ENCODE measurements at regions of chr17 and their contacts with region 1.

Region 1: DNA sequence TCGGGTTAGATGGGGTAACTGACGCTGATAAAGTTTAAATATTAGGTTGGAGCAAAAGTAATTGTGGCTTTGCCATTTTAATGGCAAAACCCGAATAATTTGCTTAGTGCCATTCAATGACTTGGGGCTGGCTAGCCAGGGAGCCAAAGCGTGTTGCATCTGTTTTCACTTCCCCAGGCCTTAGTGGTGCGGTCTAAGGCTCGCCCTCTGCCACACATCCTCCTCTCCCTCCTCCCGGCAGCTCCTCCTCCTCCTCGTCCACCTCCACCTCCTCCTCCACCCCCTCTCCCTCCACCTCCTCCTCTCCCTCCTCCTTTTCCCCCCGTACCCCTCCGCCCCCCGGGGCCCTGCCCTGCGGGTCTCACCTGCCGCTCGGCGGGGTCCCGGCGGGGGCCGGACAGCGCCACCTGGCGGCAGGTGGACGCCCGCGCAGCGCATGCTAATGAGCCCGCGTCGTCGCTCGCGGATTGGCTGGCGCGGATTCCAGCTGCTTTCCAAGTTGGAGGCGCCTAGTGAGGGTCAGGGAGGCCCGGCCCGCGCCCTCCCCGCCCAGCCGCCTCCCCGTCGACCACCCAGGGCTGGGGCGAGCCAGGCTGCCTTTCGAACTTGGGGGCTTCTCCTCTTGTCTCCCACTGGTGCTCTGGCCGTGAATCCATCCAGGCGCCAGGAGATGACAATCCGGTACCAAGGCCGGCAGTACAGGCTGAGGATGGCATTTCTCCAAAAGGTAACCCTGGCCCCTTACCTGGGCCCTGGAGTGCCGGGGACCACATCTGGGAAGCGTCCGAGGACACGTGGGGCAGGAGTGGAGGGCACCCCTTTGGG is 36.6 kb upstream of the RGS9 start:
- DNase-seq: peak; percentile 70
- ATAC-seq: peak; percentile 90
- H3K4me3 ChIP-seq: peak overlapping the region; percentile 54 to 65
- H3K27ac ChIP-seq: peak overlapping the region; percentile 69
- H3K4me1 ChIP-seq: peaks cover 16 to 25% of the 10 kb centered on the region in 2 experiments
- H3K27me3 ChIP-seq: no peaks in the 10 kb centered on the region
- CTCF ChIP-seq: peak; percentile 84 to 98 (median 97)
- POLR2A ChIP-seq: no peak
- RAD21 ChIP-seq: peak; percentile 85

Region 2: DNA sequence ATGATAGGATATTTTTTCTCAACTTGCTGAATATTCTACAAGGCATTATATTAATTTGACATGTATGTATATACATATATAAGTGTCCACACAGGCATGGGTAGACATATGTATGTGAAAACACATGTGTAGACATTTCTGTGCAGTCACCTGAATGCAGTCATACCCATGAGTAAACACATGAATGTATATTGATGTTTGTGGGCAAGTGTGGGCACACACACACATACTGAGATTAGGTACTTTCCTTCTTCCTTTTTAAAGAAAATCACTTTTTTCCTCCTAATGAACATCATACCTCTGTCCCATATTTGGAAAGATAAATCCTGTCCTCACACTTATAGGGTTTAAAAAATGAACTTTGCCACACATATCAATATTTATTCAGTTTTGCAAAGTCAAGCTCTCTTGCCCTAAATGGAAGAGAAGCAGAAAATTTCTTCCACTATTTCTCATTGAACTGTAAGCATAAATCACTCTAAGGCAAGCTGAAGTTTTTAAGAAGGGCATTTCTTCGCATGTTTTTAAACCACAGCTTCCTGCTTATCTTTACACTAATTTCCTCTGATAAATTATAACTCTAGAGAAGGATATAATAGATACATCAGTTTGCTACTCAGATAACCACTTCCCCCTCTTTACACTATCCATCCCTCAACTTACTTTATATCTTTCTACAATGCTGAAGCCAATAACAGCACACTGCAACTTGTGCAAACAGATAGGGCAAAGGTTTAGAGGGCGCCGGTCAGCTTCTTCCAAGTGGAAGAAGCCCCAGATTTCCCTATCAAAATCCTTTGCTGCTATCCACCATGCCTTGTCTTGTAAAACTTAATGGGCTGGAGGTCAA is 131.7 kb before region 1 on chr17:
- CTCF ChIA-PET with region 1: interaction called, 4 read pairs
- POLR2A ChIA-PET with region 1: interaction called, 4 read pairs
- RAD21 ChIA-PET with region 1: no interaction called
- intact Hi-C with region 1: loop called (anchors 5 kb)
- DNase-seq: no peak
- ATAC-seq: no peak
- H3K4me3 ChIP-seq: no peak overlapping the region
- H3K27ac ChIP-seq: no peak overlapping the region
- H3K4me1 ChIP-seq: peaks cover 15 to 32% of the 10 kb centered on the region in 2 experiments
- H3K27me3 ChIP-seq: no peaks in the 10 kb centered on the region
- CTCF ChIP-seq: no peak; a peak in 1 of 6 replicates
- POLR2A ChIP-seq: no peak
- RAD21 ChIP-seq: peak; percentile 28; the same call in 1 of the 2 replicates

Region 3: DNA sequence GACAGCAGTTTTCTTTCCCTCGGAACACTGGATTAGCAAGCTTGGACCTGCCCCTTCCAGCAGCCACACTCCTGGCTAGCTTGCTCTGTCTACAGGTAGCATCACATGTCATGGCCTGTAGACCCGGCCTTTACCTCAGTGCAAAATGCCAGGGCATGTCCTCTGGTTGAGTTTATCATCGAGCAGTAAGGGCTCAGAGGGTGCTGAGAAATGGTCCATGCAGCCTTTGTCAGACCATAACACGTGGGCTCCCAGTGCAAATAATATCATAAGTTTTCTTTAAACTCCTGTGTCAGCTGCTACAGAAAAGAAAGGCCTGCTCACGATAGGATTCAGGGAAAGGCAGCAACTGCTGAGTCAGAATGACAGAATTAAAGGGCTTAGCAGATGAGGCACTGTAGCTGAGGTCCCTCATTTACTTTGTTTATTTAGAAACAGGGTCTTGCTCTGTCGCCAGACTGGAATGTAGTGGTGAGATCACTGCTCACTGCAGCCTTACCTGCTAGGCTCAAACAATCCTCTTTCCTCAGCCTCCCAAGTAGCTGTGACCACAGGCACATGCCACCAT is 36.0 kb before region 1 on chr17:
- CTCF ChIA-PET with region 1: interaction called, 15 read pairs
- POLR2A ChIA-PET with region 1: interaction called, 5 read pairs
- RAD21 ChIA-PET with region 1: no interaction called
- intact Hi-C with region 1: no loop called
- DNase-seq: no peak
- ATAC-seq: peak; percentile 78
- H3K4me3 ChIP-seq: no peak overlapping the region
- H3K27ac ChIP-seq: peak overlapping the region; percentile 8; the same call in 1 of the 2 replicates
- H3K4me1 ChIP-seq: peaks cover 16 to 25% of the 10 kb centered on the region in 2 experiments
- H3K27me3 ChIP-seq: no peaks in the 10 kb centered on the region
- CTCF ChIP-seq: no peak
- POLR2A ChIP-seq: no peak
- RAD21 ChIP-seq: no peak

Region 4: GRCh38 chr17:65085397-65085796 is 15.1 kb before region 1 on chr17:
- CTCF ChIA-PET with region 1: interaction called, 27 read pairs
- POLR2A ChIA-PET with region 1: interaction called, 4 read pairs
- RAD21 ChIA-PET with region 1: no interaction called
- intact Hi-C with region 1: no loop called
- DNase-seq: no peak
- ATAC-seq: no peak
- H3K4me3 ChIP-seq: no peak overlapping the region
- H3K27ac ChIP-seq: no peak overlapping the region
- H3K4me1 ChIP-seq: no peaks in the 10 kb centered on the region
- H3K27me3 ChIP-seq: no peaks in the 10 kb centered on the region; the same call in 1 of the 2 replicates
- CTCF ChIP-seq: no peak
- POLR2A ChIP-seq: no peak
- RAD21 ChIP-seq: no peak

Region 5: DNA sequence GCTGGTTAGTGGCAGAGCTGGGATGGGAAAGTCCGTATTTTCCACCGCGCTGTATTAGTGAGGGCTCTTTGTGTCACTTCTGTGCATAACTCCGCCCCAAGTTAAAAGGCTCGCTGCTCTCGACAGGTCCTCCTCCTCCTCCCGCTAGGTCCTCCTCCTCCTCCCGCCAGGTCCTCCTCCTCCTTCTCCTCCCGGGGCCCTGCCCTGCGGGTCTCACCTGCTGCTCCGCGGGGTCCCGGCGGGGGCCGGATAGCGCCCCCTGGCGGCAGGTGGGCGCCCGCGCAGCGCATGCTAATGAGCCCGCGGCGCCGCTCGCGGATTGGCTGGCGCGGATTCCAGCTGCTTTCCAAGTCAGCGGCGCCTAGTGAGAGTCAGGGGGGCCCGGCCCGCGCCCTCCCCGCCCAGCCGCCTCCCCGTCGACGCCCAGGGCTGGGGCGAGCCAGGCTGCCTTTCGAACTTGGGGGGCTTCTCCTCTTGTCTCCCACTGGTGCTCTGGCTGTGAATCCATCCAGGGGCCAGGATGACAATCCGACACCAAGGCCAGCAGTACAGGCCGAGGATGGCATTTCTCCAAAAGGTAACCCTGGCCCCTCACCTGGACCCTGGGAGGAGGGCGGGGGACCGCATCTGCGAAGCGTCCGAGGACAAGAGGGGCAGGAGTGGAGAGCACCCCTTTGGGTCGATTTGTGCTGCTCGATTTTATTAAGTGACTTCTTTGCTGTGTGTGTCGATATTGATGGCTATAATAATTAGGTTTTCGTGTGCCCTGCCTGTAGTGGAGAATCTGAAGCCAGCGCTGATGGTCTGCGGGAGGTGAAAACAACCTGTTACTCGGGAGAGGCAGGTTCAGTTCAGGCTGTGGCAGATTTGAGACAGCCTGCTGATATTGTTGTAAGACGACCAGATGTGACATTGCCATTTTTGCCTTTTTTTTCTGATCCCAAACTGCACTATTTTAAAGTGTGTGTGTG is 36.8 kb after region 1 on chr17 and contains the start of gene RGS9:
- CTCF ChIA-PET with region 1: interaction called, 20 read pairs
- POLR2A ChIA-PET with region 1: no interaction called
- RAD21 ChIA-PET with region 1: interaction called in 1 of 2 experiments, 7 read pairs
- intact Hi-C with region 1: loop called (anchors 2 kb)
- DNase-seq: peak; percentile 84
- ATAC-seq: peak; percentile 98
- H3K4me3 ChIP-seq: peak within 1 kb of the TSS; percentile 40 to 51
- H3K27ac ChIP-seq: no peak within 1 kb of the TSS
- H3K4me1 ChIP-seq: peaks cover 4 to 13% of the 10 kb centered on the region in 2 experiments; a peak in 3 of 4 replicates
- H3K27me3 ChIP-seq: peaks cover 19% of the 10 kb centered on the region; the same call in 1 of the 2 replicates
- CTCF ChIP-seq: peak; percentile 90 to 100 (median 97)
- POLR2A ChIP-seq: no peak
- RAD21 ChIP-seq: peak; percentile 83
- total RNA-seq, gene RGS9: 8.6 TPM

Region 6: DNA sequence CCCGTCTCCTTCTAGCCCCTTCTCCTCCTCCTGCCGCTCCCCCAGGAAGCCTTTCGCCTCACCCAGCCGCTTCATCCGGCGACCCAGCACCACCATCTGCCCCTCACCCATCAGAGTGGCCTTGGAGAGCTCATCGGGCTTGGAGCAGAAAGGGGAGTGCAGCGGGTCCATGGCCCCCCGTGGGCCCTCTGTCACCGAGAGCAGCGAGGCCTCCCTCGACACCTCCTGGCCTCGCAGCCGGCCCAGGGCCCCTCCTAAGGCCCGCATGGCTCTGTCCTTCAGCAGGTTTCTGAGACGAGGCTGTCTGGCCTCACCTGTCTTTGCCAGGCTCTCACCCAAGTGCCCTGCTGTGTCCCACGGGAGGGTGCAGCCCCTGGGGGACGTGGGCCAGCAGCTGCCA is 124.5 kb after region 1 on chr17:
- CTCF ChIA-PET with region 1: no interaction called
- POLR2A ChIA-PET with region 1: no interaction called
- RAD21 ChIA-PET with region 1: no interaction called
- intact Hi-C with region 1: no loop called
- DNase-seq: no peak
- ATAC-seq: no peak
- H3K4me3 ChIP-seq: no peak overlapping the region
- H3K27ac ChIP-seq: no peak overlapping the region
- H3K4me1 ChIP-seq: peaks cover 45 to 49% of the 10 kb centered on the region in 2 experiments
- H3K27me3 ChIP-seq: no peaks in the 10 kb centered on the region
- CTCF ChIP-seq: no peak
- POLR2A ChIP-seq: no peak
- RAD21 ChIP-seq: no peak